Posterior vena cava (tissue), 2 donors: ENCODE measurements at regions of chr18 and their contacts with region 1.

Region 1: GRCh38 chr18:57141208-57142129 is 5.4 kb upstream of the BOD1L2 start:
- DNase-seq: no peak

Region 2: DNA sequence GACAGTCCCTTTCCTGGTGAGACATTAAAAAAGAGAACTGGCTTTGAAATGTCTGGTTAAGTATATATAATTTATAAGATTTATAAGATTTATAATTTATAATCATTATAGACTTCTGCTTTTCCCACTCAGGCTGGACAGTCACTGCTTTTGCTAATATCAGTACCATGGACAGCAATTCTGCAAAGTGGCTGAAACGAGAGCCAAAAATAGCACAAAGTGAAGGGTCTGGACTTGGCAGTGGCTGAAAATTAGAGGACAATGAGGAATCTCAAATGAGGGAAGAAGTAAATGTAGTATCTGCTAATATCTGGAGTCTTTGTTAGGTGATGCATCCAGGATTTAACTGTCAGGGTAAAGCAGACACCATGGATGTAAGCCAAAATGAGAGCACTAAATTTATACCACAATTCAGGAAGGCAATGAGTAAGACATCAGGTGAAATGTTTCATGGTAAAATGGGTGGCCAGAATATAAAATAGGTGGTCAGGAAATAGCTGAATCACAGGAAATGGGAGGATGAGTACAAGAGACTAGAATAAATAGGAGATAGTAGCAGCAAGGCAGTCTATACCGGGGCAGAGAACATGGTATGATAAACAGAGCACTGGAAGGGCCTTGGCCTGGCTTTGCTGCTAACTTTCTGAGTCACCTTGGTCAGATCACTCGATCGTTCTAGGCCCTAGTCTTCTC is 34.2 kb before region 1 on chr18:
- intact Hi-C with region 1: loop called in 1 of 2 experiments (anchors 1 kb)
- DNase-seq: no peak

Region 3: DNA sequence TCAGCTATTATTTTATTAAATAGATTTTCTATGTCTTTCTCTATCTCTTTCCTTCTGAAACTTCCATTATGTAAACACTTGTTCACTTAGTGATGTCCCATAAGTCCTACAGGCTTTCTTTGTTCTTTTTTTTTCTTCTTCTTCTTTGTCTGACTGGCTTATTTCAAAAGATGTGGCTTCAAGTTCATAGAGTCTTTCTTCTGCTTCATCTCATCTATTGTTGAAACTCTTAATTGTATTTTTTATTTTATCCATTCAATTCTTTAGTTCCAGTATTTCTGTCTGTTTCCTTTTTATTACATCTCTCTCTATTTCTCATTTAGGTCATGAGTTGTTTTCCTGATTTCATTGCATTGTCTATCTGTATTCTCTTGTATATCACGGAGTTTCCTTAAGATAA is 44.0 kb after region 1 on chr18:
- intact Hi-C with region 1: no loop called
- DNase-seq: no peak

Region 4: DNA sequence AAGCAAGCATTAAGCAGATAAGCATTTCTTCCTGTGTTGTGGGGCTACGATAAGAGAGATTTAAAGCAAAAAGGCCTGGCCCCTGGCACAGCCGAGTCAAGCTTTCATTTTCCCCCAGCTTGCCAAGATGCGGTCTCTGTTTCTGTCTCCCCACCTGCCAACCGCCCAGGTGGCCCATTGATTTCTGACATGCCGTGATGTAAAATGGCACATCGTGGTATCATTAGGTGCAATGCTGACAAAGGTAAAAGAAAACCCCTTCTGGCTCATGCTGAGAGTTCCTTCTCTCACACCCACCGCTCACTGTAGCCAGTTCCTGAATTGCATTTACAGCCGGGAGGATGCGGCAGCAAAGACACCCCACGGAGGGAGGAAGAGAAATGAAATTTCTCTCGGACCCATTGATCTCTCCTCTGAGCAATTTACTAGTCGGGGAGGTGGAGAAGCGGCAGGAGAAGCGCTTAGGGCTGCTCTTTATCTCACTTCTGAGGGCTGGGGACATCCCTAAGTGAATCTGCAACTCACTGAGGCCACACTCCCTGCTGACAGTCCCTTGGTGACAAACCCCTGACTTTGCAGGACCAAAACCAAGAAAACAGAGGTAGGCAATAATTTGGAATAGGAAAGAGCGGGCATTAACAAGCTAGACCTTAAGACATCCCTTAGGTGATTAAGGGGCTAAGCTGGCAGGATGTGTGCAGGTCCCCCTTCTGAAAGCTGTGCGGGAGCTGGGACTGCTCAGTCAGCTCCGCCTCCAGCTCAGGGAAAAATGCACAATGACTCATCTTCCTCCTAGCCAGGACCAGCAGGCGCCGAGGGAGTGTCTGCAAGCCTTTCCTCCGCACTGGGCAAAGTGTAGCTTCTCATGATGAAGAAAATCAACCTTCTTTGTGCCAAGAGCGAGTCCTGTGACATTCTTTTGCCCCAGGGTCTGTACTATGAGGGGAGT is 68.5 kb after region 1 on chr18:
- intact Hi-C with region 1: no loop called
- DNase-seq: peak; percentile 80